CD14-positive monocyte (primary cell): ENCODE measurements at regions of chr4 and their contacts with region 1.

Region 1: GRCh38 chr4:40719008-40719623 is 30.6 kb upstream of the NSUN7 start:
- DNase-seq: peak in 2 of 3 donors; percentile 45 to 56
- H3K4me3 ChIP-seq: no peak overlapping the region
- H3K4me3 Mint-ChIP-seq: no peak overlapping the region
- H3K27ac ChIP-seq: no peak overlapping the region
- H3K27ac Mint-ChIP-seq: peak overlapping the region in 3 of 7 donors; percentile 7 to 61 (median 25)
- H3K4me1 ChIP-seq: peaks cover 49 to 59% of the 10 kb centered on the region in 2 donors
- H3K4me1 Mint-ChIP-seq: peaks cover 28% of the 10 kb centered on the region
- H3K27me3 ChIP-seq: no peaks in the 10 kb centered on the region
- H3K27me3 Mint-ChIP-seq: peaks cover 0 to 3% (median 0%) of the 10 kb centered on the region in 3 donors
- CTCF ChIP-seq: peak; percentile 59

Region 2: DNA sequence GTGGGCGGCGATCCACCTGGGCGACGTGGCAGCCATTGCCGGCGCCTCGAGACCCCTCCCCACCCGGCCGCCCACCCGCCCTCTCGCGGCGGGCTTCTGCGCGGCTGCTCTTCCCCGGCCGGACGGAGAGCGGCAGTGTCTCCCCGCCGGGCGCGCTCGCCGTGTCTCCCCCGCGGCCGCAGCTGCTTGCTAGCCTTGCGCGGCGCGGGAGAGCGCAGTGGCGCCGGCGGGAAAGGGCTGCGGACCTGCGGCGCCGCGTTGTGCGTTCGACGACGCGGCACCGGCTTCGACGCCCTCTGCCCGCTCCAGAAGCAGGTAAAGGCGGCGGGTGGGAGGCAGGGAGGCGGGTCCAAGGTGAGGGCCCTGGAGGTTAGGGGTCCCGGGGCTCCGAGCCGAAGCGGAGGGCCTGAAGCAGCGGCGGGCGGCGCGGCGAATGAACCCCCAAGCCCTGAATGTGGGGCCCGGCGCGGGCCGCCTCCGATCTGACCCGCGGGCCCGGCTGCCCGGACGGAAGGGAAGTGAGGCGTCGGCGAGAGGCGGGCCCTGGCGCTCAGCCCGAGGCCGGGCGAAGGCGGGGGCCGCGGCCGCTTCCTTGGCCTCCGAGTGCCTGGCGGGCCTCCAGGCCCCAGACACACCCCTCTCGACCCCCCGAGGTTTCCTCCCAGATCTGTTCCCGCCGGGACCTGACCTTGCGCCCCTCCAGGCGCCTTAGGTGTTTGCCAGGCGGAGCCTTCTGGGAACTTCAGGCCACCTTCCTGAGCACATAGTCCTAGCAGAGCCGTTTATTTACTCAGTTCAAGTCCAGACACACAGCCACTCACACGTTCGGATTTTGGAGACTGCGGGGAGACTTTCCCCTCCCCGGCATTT is 662.2 kb before region 1 on chr4 and contains the start of gene N4BP2:
- intact Hi-C with region 1: loop called in 1 of 2 experiments (anchors 10 kb)
- DNase-seq: peak; percentile 59 to 71 (median 61)
- H3K4me3 ChIP-seq: peak within 1 kb of the TSS; percentile 80 to 92 (median 88)
- H3K4me3 Mint-ChIP-seq: peak within 1 kb of the TSS; percentile 95 to 97
- H3K27ac ChIP-seq: peak within 1 kb of the TSS; percentile 95 to 98
- H3K27ac Mint-ChIP-seq: peak within 1 kb of the TSS; percentile 97 to 100 (median 99)
- H3K4me1 ChIP-seq: peaks cover 23 to 36% of the 10 kb centered on the region in 2 donors
- H3K4me1 Mint-ChIP-seq: peaks cover 29% of the 10 kb centered on the region
- H3K27me3 ChIP-seq: peaks cover 0 to under 1% of the 10 kb centered on the region in 2 donors
- H3K27me3 Mint-ChIP-seq: peaks cover 0 to 8% (median 3%) of the 10 kb centered on the region in 3 donors
- CTCF ChIP-seq: peak; percentile 86
- polyA plus RNA-seq, gene N4BP2: 3.1 to 8.3 (median 4.8) TPM

Region 3: DNA sequence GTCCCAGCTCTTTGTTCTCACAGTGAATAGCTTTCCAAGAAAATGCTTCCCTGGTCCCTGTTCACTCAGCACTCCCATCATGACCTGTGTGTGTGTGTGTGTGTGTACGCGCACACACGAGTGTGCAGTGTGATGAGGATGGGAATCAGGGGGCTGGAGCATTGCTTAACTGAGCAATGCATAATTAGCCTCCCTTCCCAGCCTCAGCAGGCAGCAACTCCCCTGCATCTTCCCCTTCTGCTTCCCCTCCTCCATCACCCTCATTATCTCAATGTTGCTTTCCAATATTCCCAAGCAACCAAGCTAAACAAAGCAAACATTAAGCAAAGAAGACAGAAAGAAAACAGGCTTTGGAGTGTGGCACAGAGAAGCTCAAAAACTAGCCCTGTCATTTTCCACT is 226.4 kb before region 1 on chr4:
- intact Hi-C with region 1: loop called in 1 of 2 experiments (anchors 5 kb)
- DNase-seq: peak in 2 of 3 donors; percentile 14 to 19
- H3K4me3 ChIP-seq: no peak overlapping the region
- H3K4me3 Mint-ChIP-seq: no peak overlapping the region
- H3K27ac ChIP-seq: peak overlapping the region; percentile 25 to 79
- H3K27ac Mint-ChIP-seq: peak overlapping the region; percentile 79 to 93 (median 91)
- H3K4me1 ChIP-seq: peaks cover 35 to 57% of the 10 kb centered on the region in 2 donors
- H3K4me1 Mint-ChIP-seq: peaks cover 60% of the 10 kb centered on the region
- H3K27me3 ChIP-seq: no peaks in the 10 kb centered on the region
- H3K27me3 Mint-ChIP-seq: no peaks in the 10 kb centered on the region
- CTCF ChIP-seq: no peak

Region 4: GRCh38 chr4:40564004-40564403 is 155.1 kb before region 1 on chr4:
- intact Hi-C with region 1: loop called (anchors 10 kb)
- DNase-seq: peak; percentile 89 to 96 (median 95)
- H3K4me3 ChIP-seq: no peak overlapping the region
- H3K4me3 Mint-ChIP-seq: no peak overlapping the region
- H3K27ac ChIP-seq: peak overlapping the region; percentile 88 to 98
- H3K27ac Mint-ChIP-seq: peak overlapping the region; percentile 96 to 99 (median 97)
- H3K4me1 ChIP-seq: peaks cover 69 to 76% of the 10 kb centered on the region in 2 donors
- H3K4me1 Mint-ChIP-seq: peaks cover 77% of the 10 kb centered on the region
- H3K27me3 ChIP-seq: no peaks in the 10 kb centered on the region
- H3K27me3 Mint-ChIP-seq: peaks cover 1 to 3% (median 1%) of the 10 kb centered on the region in 3 donors
- CTCF ChIP-seq: no peak

Region 5: DNA sequence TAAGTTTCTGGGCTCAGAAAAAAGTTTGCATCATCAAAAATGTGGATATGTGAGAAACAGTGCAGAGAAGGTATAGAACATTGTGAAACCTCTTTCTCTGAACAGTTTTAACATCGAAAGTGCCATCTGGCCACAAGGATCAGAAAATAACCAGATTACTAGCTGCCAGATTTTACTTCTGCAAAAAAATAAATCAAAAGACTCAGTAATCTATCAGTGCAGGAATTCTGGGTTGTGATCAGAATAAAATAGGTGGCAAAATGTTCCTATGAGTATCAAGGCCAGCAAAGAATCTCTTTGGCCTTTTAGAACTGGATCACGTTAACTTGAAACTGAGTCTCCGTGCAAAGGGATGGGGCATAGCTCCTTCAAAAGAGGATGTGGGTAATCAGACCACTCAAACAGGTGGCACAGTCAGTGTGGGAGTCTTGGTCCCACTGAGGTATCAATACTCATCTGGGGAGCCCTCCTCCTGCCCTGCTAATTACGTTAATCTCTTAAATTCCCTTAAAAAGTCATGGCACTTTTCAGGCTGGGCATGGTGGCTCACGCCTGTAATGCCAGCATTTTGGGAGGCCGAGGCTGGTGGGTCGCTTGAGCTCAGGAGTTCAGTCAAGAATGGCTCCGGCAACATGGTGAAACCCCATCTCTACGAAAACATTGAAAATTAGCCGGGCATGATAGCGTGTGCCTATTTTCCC is 62.8 kb before region 1 on chr4:
- intact Hi-C with region 1: loop called in 1 of 2 experiments (anchors 10 kb)
- DNase-seq: peak in 2 of 3 donors; percentile 29 to 37
- H3K4me3 ChIP-seq: no peak overlapping the region
- H3K4me3 Mint-ChIP-seq: peak overlapping the region in 1 of 2 donors; percentile 55
- H3K27ac ChIP-seq: peak overlapping the region in 1 of 2 donors; percentile 47
- H3K27ac Mint-ChIP-seq: peak overlapping the region; percentile 1 to 76 (median 66)
- H3K4me1 ChIP-seq: peaks cover 43 to 46% of the 10 kb centered on the region in 2 donors
- H3K4me1 Mint-ChIP-seq: peaks cover 35% of the 10 kb centered on the region
- H3K27me3 ChIP-seq: no peaks in the 10 kb centered on the region
- H3K27me3 Mint-ChIP-seq: peaks cover 0 to 2% (median 1%) of the 10 kb centered on the region in 3 donors
- CTCF ChIP-seq: no peak

Region 6: DNA sequence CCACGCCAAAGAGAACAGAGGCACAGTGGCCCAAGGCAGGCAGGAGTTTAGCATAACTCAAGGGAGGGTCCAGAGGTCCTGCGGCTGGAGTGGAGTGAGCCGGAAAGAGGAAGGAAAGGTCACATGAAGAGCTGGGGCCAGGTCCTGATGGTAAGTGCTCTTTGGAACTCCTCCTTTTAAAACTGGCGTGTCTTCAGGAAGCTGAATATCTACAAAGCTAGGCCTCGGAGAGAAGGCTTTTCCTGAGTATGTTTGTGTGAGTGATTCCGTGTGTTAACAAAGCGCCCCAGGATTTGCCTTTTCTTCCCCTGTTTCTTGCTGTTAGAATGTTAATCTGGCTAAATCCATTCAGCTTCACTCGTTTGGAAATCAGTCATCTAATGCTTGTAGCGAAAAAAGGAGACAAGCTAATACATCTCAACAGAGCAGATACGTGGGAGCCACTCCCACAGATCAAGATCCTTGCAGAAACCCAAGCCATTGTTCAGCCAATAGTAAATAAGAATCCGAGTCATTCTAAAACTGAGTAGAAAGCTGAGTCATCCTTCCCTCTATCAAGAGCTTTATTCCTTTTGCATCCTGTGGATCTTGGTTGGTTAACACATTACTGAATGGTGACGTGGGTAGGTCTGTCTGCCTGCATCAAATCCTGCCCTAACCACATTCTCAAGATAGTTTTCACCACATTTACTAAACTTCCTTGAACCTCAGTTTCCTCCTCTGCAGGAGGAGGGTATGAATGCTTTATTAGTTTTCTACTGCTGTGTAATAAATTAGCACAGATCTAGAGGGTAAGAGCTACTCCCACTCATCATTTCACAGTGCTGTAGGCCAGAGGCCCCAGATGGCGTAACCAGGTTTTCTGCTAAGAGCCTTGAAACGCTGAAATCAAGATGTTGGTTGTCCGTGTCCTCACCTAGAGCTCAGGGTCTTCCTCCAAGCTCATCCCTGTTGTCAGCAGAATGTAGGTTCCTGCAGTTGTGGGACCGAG is 46.3 kb before region 1 on chr4:
- intact Hi-C with region 1: no loop called
- DNase-seq: peak; percentile 73 to 89 (median 84)
- H3K4me3 ChIP-seq: peak overlapping the region in 1 of 3 experiments; percentile 53
- H3K4me3 Mint-ChIP-seq: peak overlapping the region; percentile 57 to 78
- H3K27ac ChIP-seq: peak overlapping the region; percentile 79 to 88
- H3K27ac Mint-ChIP-seq: peak overlapping the region; percentile 94 to 98 (median 97)
- H3K4me1 ChIP-seq: peaks cover 27 to 32% of the 10 kb centered on the region in 2 donors
- H3K4me1 Mint-ChIP-seq: peaks cover 32% of the 10 kb centered on the region
- H3K27me3 ChIP-seq: no peaks in the 10 kb centered on the region
- H3K27me3 Mint-ChIP-seq: no peaks in the 10 kb centered on the region
- CTCF ChIP-seq: no peak

Region 7: GRCh38 chr4:40933272-40934053 is 214.3 kb after region 1 on chr4:
- intact Hi-C with region 1: no loop called
- DNase-seq: no peak
- H3K4me3 ChIP-seq: no peak overlapping the region
- H3K4me3 Mint-ChIP-seq: no peak overlapping the region
- H3K27ac ChIP-seq: no peak overlapping the region
- H3K27ac Mint-ChIP-seq: no peak overlapping the region
- H3K4me1 ChIP-seq: peaks cover 0 to 3% of the 10 kb centered on the region in 2 donors
- H3K4me1 Mint-ChIP-seq: peaks cover 4% of the 10 kb centered on the region
- H3K27me3 ChIP-seq: no peaks in the 10 kb centered on the region
- H3K27me3 Mint-ChIP-seq: no peaks in the 10 kb centered on the region
- CTCF ChIP-seq: no peak